GM12878 (cell line): ENCODE measurements at regions of chr1 and their contacts with region 1.

Region 1: GRCh38 chr1:67760030-67760821 is 73.0 kb downstream of the GNG12 start:
- DNase-seq: peak; percentile 90
- ATAC-seq: peak; percentile 98
- H3K4me3 ChIP-seq: no peak overlapping the region
- H3K27ac ChIP-seq: peak overlapping the region; percentile 84
- H3K4me1 ChIP-seq: peaks cover 15% of the 10 kb centered on the region
- H3K27me3 ChIP-seq: peaks cover 0 to 3% of the 10 kb centered on the region in 2 experiments; a peak in 2 of 4 replicates
- CTCF ChIP-seq: peak; percentile 70 to 84 (median 81); a peak in 5 of 6 replicates
- EP300 ChIP-seq: peak; percentile 96 to 99; a peak in 3 of 4 replicates
- POLR2A ChIP-seq: no peak
- RAD21 ChIP-seq: peak; percentile 85

Region 2: GRCh38 chr1:67339623-67340343 is 420.4 kb before region 1 on chr1:
- CTCF ChIA-PET with region 1: interaction called, 5 read pairs
- POLR2A ChIA-PET with region 1: no interaction called
- RAD21 ChIA-PET with region 1: no interaction called
- SMC1A ChIA-PET with region 1: no interaction called
- in situ Hi-C with region 1: loop called (anchors 10 kb)
- intact Hi-C with region 1: loop called (anchors 5 kb)
- DNase-seq: peak; percentile 84
- ATAC-seq: peak; percentile 35
- H3K4me3 ChIP-seq: peak overlapping the region; percentile 20; the same call in 1 of the 2 replicates
- H3K27ac ChIP-seq: peak overlapping the region; percentile 87
- H3K4me1 ChIP-seq: peaks cover 71% of the 10 kb centered on the region
- H3K27me3 ChIP-seq: no peaks in the 10 kb centered on the region
- CTCF ChIP-seq: no peak
- EP300 ChIP-seq: no peak
- POLR2A ChIP-seq: no peak
- RAD21 ChIP-seq: no peak

Region 3: GRCh38 chr1:67561704-67562113 is 198.5 kb before region 1 on chr1:
- CTCF ChIA-PET with region 1: interaction called, 227 read pairs
- POLR2A ChIA-PET with region 1: interaction called, 9 read pairs
- RAD21 ChIA-PET with region 1: interaction called, 86 read pairs
- SMC1A ChIA-PET with region 1: interaction called, 205 read pairs
- in situ Hi-C with region 1: loop called (anchors 5 kb)
- intact Hi-C with region 1: loop called (anchors 1 kb)
- DNase-seq: peak; percentile 24
- ATAC-seq: peak; percentile 94
- H3K4me3 ChIP-seq: no peak overlapping the region
- H3K27ac ChIP-seq: no peak overlapping the region
- H3K4me1 ChIP-seq: no peaks in the 10 kb centered on the region; the same call in 1 of the 2 replicates
- H3K27me3 ChIP-seq: no peaks in the 10 kb centered on the region
- CTCF ChIP-seq: peak; percentile 82 to 88 (median 88)
- EP300 ChIP-seq: no peak
- POLR2A ChIP-seq: no peak
- RAD21 ChIP-seq: peak; percentile 93

Region 4: GRCh38 chr1:67674260-67675011 is 85.8 kb before region 1 on chr1:
- CTCF ChIA-PET with region 1: interaction called, 13 read pairs
- POLR2A ChIA-PET with region 1: no interaction called
- RAD21 ChIA-PET with region 1: interaction called, 10 read pairs
- SMC1A ChIA-PET with region 1: interaction called, 7 read pairs
- in situ Hi-C with region 1: no loop called
- intact Hi-C with region 1: no loop called
- DNase-seq: no peak
- ATAC-seq: peak; percentile 84
- H3K4me3 ChIP-seq: no peak overlapping the region
- H3K27ac ChIP-seq: no peak overlapping the region
- H3K4me1 ChIP-seq: no peaks in the 10 kb centered on the region
- H3K27me3 ChIP-seq: no peaks in the 10 kb centered on the region
- CTCF ChIP-seq: no peak
- EP300 ChIP-seq: no peak
- POLR2A ChIP-seq: no peak
- RAD21 ChIP-seq: no peak

Region 5: DNA sequence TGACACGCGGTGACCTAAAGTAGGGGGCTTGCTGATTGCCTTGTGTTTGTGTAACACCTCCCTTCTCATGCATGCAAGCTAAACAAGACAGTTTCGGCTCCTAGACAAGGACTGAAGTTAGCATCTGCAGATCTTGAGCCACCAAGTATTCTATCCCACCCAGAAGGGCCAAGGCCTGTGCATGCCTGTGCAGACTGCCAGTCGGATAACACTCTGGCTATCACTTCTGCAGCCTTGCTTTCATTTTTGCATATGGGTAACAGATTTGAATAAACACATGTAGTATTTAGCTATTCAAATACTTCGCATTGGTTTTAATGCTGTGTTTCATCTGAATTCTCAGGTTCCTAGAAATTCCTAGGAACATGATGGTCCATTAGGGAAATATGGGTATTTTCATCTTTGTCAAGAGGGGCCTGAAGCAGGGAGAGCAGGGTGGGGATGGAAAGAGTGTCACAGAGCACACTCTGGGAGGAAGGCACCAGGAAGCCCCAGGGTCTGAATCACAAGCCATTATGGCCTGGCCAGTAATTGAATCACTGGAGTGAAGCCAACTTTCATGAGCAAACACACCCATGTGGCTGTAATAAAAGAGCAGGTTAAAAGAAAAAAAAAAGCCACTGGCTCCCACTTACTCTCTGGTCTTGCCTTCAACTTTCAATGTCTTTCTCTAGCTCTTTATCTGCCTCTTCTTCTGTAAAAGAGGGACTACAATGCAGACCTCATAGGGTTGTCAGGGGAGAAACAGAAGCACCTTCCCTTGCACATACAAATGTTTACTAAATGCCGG is 47.0 kb before region 1 on chr1:
- CTCF ChIA-PET with region 1: interaction called, 24 read pairs
- POLR2A ChIA-PET with region 1: interaction called, 3 read pairs
- RAD21 ChIA-PET with region 1: interaction called, 18 read pairs
- SMC1A ChIA-PET with region 1: interaction called, 11 read pairs
- in situ Hi-C with region 1: no loop called
- intact Hi-C with region 1: no loop called
- DNase-seq: no peak
- ATAC-seq: peak; percentile 70
- H3K4me3 ChIP-seq: no peak overlapping the region
- H3K27ac ChIP-seq: no peak overlapping the region
- H3K4me1 ChIP-seq: no peaks in the 10 kb centered on the region
- H3K27me3 ChIP-seq: no peaks in the 10 kb centered on the region
- CTCF ChIP-seq: no peak
- EP300 ChIP-seq: no peak
- POLR2A ChIP-seq: no peak
- RAD21 ChIP-seq: no peak

Region 6: DNA sequence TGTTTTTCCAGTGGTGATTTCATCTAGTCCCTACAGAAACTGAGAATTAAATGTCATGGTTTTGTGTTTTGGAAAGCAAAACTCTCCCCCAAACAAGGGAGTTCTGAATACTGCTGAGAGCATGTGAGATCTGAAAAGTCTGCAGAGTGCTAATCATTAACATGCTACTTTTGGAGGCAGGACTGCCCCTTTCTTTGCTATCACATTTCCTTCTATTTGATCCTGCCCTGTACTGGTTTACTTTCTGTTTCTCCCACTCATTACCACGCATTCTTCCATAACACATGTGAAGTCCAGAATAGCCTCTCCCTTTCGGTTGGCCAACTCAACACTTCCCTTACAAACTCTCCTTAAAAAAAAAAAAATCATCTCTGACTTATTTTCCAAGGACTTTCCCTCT is 11.6 kb before region 1 on chr1:
- CTCF ChIA-PET with region 1: interaction called, 39 read pairs
- POLR2A ChIA-PET with region 1: interaction called, 9 read pairs
- RAD21 ChIA-PET with region 1: interaction called, 23 read pairs
- SMC1A ChIA-PET with region 1: interaction called, 34 read pairs
- in situ Hi-C with region 1: no loop called
- intact Hi-C with region 1: no loop called
- DNase-seq: peak; percentile 47
- ATAC-seq: peak; percentile 88
- H3K4me3 ChIP-seq: 0 out of 2 replicates have a peak overlapping the region, but pooled peaks have one; percentile 0
- H3K27ac ChIP-seq: no peak overlapping the region
- H3K4me1 ChIP-seq: peaks cover 12% of the 10 kb centered on the region
- H3K27me3 ChIP-seq: no peaks in the 10 kb centered on the region
- CTCF ChIP-seq: no peak
- EP300 ChIP-seq: no peak
- POLR2A ChIP-seq: no peak
- RAD21 ChIP-seq: no peak

Region 7: GRCh38 chr1:67824766-67825165 is 64.5 kb after region 1 on chr1:
- CTCF ChIA-PET with region 1: interaction called, 298 read pairs
- POLR2A ChIA-PET with region 1: interaction called, 35 read pairs
- RAD21 ChIA-PET with region 1: interaction called, 320 read pairs
- SMC1A ChIA-PET with region 1: interaction called, 1,058 read pairs
- in situ Hi-C with region 1: no loop called
- intact Hi-C with region 1: no loop called
- DNase-seq: no peak
- ATAC-seq: no peak
- H3K4me3 ChIP-seq: no peak overlapping the region
- H3K27ac ChIP-seq: no peak overlapping the region
- H3K4me1 ChIP-seq: no peaks in the 10 kb centered on the region
- H3K27me3 ChIP-seq: peaks cover 0 to 3% of the 10 kb centered on the region in 2 experiments; a peak in 1 of 4 replicates
- CTCF ChIP-seq: no peak
- EP300 ChIP-seq: no peak
- POLR2A ChIP-seq: no peak
- RAD21 ChIP-seq: no peak